Thyroid gland (tissue), 4 donors: ENCODE measurements at regions of chr4 and their contacts with region 1.

Region 1: GRCh38 chr4:38179690-38180377 is 219.6 kb downstream of the PTTG2 start:
- DNase-seq: peak; percentile 77
- H3K4me3 ChIP-seq: no peak overlapping the region
- H3K27ac ChIP-seq: no peak overlapping the region
- H3K4me1 ChIP-seq: peaks cover 0 to 5% of the 10 kb centered on the region in 2 donors
- H3K27me3 ChIP-seq: no peaks in the 10 kb centered on the region
- CTCF ChIP-seq: peak; percentile 73 to 94 (median 91)
- POLR2A ChIP-seq: no peak

Region 2: GRCh38 chr4:37908488-37909331 is 271.1 kb before region 1 on chr4:
- intact Hi-C with region 1: no loop called
- DNase-seq: no peak
- H3K4me3 ChIP-seq: no peak overlapping the region
- H3K27ac ChIP-seq: peak overlapping the region in 2 of 3 donors; percentile 29 to 50
- H3K4me1 ChIP-seq: peaks cover 0 to 15% of the 10 kb centered on the region in 2 donors
- H3K27me3 ChIP-seq: no peaks in the 10 kb centered on the region
- CTCF ChIP-seq: no peak
- POLR2A ChIP-seq: no peak

Region 3: GRCh38 chr4:38062088-38062893 is 117.5 kb before region 1 on chr4:
- intact Hi-C with region 1: loop called (anchors 10 kb)
- DNase-seq: peak; percentile 77 to 83
- H3K4me3 ChIP-seq: no peak overlapping the region
- H3K27ac ChIP-seq: peak overlapping the region in 2 of 3 donors; percentile 39 to 40
- H3K4me1 ChIP-seq: peaks cover 22 to 30% of the 10 kb centered on the region in 2 donors
- H3K27me3 ChIP-seq: no peaks in the 10 kb centered on the region
- CTCF ChIP-seq: peak; percentile 62 to 91 (median 80)
- POLR2A ChIP-seq: no peak

Region 4: DNA sequence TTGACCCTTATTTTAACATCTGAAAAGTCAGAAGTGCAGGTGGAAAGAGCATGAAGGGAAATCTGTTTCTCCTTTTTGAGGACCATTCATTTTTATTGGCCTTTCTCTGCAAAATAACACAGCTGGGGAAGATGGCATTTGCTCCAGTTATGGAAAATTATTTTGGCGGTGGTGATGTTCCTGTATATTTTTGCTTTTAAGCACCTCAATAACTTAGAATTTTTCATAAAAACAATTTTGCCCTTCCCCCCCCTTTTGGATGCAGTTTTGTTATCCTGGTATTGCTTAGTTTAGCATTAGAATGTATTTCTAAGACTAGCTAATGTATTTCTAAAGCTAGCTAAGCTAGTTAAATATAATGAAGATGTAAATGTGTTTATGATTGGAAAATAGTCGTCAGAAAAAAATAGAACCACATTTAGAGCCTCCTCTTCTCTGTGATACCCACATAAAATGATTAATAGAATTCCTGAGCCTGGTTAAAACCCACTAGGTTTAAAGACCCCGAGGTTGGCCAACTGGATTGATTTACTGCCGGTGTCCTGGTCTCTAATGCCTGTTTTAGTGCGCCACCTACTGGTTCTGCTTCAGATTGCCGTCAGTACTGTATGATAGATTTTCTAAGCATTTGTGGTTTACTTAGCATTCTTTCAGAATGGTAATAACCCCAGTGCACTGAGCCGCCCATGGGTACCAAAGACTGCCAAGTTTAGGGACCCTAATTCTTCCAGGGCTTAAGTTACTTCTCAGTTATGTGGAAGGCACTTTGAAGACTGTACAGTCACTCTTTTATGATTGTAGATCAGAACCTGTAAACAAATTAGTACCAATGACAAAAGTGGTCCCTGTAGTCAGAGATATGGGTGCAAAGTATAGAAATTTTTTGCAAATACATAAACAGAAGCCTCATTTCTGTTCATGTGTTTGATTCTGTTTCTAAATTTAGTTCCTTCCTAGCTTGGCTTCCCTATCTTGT is 495.6 kb after region 1 on chr4:
- intact Hi-C with region 1: loop called (anchors 5 kb)
- DNase-seq: peak; percentile 84 to 86
- H3K4me3 ChIP-seq: no peak overlapping the region
- H3K27ac ChIP-seq: peak overlapping the region; percentile 73 to 97 (median 91)
- H3K4me1 ChIP-seq: peaks cover 61 to 70% of the 10 kb centered on the region in 2 donors
- H3K27me3 ChIP-seq: no peaks in the 10 kb centered on the region
- CTCF ChIP-seq: peak; percentile 73 to 90 (median 84)
- POLR2A ChIP-seq: no peak

Region 5: DNA sequence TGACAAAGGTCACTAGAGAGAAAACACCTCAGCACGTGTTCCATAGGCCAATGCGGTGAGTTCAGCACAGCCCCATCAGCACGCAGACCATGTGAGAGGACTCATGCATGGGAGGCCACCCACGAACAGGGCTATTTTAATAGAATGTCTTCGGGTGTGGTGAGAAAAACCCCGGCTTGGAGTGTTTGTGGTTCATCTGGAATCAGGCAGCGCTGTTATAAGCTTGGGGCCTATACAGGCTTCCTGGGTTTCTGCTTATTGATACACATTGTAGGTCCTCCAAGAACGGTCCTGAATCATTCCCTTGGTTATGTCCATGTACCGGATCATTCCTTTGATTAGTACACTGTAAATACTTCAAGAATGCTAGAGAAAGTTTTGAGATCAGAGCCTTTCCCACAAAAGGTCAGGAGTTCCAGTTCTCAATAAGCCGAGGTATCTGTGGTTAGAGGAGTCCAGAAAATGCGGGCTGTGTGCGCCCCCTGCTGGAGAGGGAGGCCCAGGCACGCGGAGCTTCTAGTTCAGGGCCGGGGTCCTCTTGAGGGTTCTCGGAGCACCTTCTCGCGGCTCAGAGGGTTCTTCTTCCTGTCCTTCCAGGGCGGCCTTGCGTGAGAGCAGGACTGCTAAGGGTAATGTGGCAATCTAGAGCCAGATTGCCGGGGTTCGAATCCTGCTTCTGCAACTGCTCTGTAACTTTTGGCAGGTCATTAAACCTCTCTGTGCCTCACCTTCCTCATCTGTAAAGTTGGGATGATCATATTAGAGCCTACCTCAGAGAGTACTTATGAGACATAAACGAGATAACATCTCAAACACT is 551.2 kb after region 1 on chr4:
- intact Hi-C with region 1: loop called (anchors 5 kb)
- DNase-seq: peak; percentile 73 to 82
- H3K4me3 ChIP-seq: no peak overlapping the region
- H3K27ac ChIP-seq: no peak overlapping the region
- H3K4me1 ChIP-seq: peaks cover 9 to 27% of the 10 kb centered on the region in 2 donors
- H3K27me3 ChIP-seq: no peaks in the 10 kb centered on the region
- CTCF ChIP-seq: peak; percentile 72 to 90 (median 82)
- POLR2A ChIP-seq: no peak

Region 6: GRCh38 chr4:38743866-38744265 is 564.0 kb after region 1 on chr4:
- intact Hi-C with region 1: no loop called
- DNase-seq: no peak
- H3K4me3 ChIP-seq: no peak overlapping the region
- H3K27ac ChIP-seq: no peak overlapping the region
- H3K4me1 ChIP-seq: peaks cover 9 to 12% of the 10 kb centered on the region in 2 donors
- H3K27me3 ChIP-seq: no peaks in the 10 kb centered on the region
- CTCF ChIP-seq: no peak
- POLR2A ChIP-seq: no peak